Endothelial cell of umbilical vein (primary cell): ENCODE measurements at regions of chr1 and their contacts with region 1.

Region 1: GRCh38 chr1:19882111-19883071 is at the start of gene OTUD3:
- DNase-seq: peak; percentile 98
- H3K4me3 ChIP-seq: peak within 1 kb of the TSS; percentile 71 to 97 (median 94)
- H3K27ac ChIP-seq: peak within 1 kb of the TSS; percentile 84
- H3K4me1 ChIP-seq: peaks cover 15% of the 10 kb centered on the region
- H3K27me3 ChIP-seq: peaks cover 0 to 2% of the 10 kb centered on the region in 2 experiments
- CTCF ChIP-seq: peak; percentile 87 to 98
- POLR2A ChIP-seq: peak; percentile 70
- total RNA-seq, gene OTUD3: 8.1 and 10.6 TPM in 2 replicates

Region 2: GRCh38 chr1:19405761-19406487 is 476.5 kb before region 1 on chr1:
- CTCF ChIA-PET with region 1: no interaction called
- POLR2A ChIA-PET with region 1: no interaction called
- dilution Hi-C with region 1: no loop called
- intact Hi-C with region 1: no loop called
- DNase-seq: no peak
- H3K4me3 ChIP-seq: no peak overlapping the region
- H3K27ac ChIP-seq: no peak overlapping the region
- H3K4me1 ChIP-seq: no peaks in the 10 kb centered on the region
- H3K27me3 ChIP-seq: no peaks in the 10 kb centered on the region
- CTCF ChIP-seq: no peak
- POLR2A ChIP-seq: no peak

Region 3: GRCh38 chr1:19715334-19716203 is 166.8 kb before region 1 on chr1:
- CTCF ChIA-PET with region 1: interaction called, 15 read pairs
- POLR2A ChIA-PET with region 1: no interaction called
- dilution Hi-C with region 1: no loop called
- intact Hi-C with region 1: loop called (anchors 1 kb)
- DNase-seq: peak; percentile 97
- H3K4me3 ChIP-seq: no peak overlapping the region
- H3K27ac ChIP-seq: no peak overlapping the region
- H3K4me1 ChIP-seq: no peaks in the 10 kb centered on the region
- H3K27me3 ChIP-seq: no peaks in the 10 kb centered on the region
- CTCF ChIP-seq: peak; percentile 96 to 98
- POLR2A ChIP-seq: no peak

Region 4: DNA sequence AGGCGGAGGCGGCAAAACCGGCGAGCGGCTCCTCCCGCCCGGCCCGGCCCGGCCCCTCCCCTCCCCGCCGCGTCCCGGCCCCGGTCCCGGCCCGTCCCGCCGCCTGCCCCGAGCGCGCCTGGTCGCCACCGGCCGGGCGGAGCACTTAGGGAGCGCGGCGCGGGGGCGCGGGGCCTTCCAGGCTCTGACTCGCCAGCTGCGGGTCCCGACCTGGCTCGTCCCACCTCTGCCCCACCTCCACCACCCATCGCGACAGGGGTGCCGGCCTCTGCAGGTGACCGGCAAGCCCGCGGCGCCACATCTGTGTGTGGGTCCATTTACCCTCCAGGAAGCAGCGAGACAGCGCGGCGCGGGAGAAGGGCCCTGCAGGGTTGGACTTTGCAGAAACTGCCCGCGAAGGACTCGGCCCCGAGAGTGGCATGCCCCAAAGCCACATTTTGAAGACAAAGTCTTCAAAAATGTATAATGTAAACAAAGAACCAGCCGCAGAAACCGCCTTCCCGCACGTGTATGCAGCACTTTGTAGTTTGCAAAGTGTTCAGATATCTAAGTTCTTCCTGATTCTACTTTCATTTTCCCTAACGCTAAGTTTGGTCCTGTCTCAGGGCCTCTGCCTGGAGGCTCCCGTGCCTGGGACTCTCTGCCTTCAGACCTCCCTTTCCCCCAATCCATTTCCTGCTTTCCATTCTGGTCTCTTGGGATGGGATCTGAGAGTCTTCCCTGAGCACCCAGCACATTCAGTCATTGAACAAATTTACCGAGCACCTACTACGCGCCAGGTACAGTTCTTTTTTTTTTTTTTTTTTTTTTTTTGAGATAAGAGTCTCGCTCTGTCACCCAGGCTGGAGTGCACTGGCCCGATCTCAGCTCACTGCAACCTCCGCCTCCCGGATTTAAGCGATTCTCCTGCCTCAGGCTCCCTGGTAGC is 82.2 kb before region 1 on chr1 and contains the start of gene TMCO4:
- CTCF ChIA-PET with region 1: interaction called, 4 read pairs
- POLR2A ChIA-PET with region 1: no interaction called
- dilution Hi-C with region 1: no loop called
- intact Hi-C with region 1: loop called (anchors 2 kb)
- DNase-seq: peak; percentile 60
- H3K4me3 ChIP-seq: peak within 1 kb of the TSS; percentile 40 to 72 (median 69)
- H3K27ac ChIP-seq: peak within 1 kb of the TSS; percentile 15
- H3K4me1 ChIP-seq: peaks cover 9% of the 10 kb centered on the region
- H3K27me3 ChIP-seq: no peaks in the 10 kb centered on the region
- CTCF ChIP-seq: no peak
- POLR2A ChIP-seq: no peak
- total RNA-seq, gene TMCO4: 9.0 and 10.3 TPM in 2 replicates

Region 5: GRCh38 chr1:19892628-19893168 is 10.3 kb after region 1 on chr1:
- CTCF ChIA-PET with region 1: interaction called, 19 read pairs
- POLR2A ChIA-PET with region 1: interaction called, 5 read pairs
- dilution Hi-C with region 1: no loop called
- intact Hi-C with region 1: no loop called
- DNase-seq: peak; percentile 62
- H3K4me3 ChIP-seq: no peak overlapping the region
- H3K27ac ChIP-seq: peak overlapping the region; percentile 10
- H3K4me1 ChIP-seq: peaks cover 34% of the 10 kb centered on the region
- H3K27me3 ChIP-seq: no peaks in the 10 kb centered on the region
- CTCF ChIP-seq: no peak
- POLR2A ChIP-seq: no peak

Region 6: DNA sequence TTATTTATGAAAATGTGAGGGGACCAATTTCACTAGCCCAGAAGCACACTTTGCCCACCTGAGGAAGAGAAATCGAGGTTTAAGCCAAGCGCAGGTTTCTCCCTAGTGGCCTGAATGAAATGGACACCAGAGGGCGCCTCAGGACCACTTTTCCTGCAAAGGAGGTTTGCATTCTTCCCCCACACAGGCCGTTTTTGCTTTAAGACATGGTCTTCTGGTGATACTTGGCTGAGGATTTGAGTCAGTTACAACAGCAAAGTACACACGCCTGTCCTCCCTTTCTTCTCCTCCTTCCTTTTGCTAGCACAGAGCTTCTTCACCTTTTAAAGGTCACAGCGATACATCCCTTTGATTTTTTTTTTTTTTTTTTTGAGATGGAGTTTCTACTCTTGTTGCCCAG is 35.7 kb after region 1 on chr1:
- CTCF ChIA-PET with region 1: interaction called, 6 read pairs
- POLR2A ChIA-PET with region 1: interaction called, 3 read pairs
- dilution Hi-C with region 1: no loop called
- intact Hi-C with region 1: loop called (anchors 1 kb)
- DNase-seq: peak; percentile 72
- H3K4me3 ChIP-seq: no peak overlapping the region
- H3K27ac ChIP-seq: no peak overlapping the region
- H3K4me1 ChIP-seq: no peaks in the 10 kb centered on the region
- H3K27me3 ChIP-seq: no peaks in the 10 kb centered on the region
- CTCF ChIP-seq: peak; percentile 85 to 87
- POLR2A ChIP-seq: no peak

Region 7: DNA sequence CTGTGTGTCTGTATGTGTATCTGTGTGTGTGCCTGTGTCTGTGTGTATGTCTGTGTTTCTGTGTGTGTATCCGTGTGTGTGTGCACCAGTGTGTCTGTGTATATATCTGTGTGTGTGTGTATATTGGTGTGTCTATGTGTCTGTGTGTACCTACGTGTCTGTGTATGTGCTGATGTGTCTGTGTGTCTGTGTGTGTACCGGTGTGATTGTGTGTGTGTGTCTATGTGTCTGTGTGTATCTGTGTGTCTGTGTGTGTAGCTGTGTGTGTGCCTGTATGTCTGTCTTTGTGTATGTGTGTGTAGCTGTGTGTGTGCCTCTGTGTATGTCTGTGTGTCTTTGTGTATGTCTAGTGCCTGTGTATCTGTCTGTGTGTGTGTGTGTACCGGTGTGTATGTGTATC is 571.6 kb after region 1 on chr1:
- CTCF ChIA-PET with region 1: no interaction called
- POLR2A ChIA-PET with region 1: no interaction called
- dilution Hi-C with region 1: no loop called
- intact Hi-C with region 1: no loop called
- DNase-seq: no peak
- H3K4me3 ChIP-seq: no peak overlapping the region
- H3K27ac ChIP-seq: no peak overlapping the region
- H3K4me1 ChIP-seq: no peaks in the 10 kb centered on the region
- H3K27me3 ChIP-seq: no peaks in the 10 kb centered on the region
- CTCF ChIP-seq: no peak
- POLR2A ChIP-seq: no peak